ENCODE measurements at regions of chr9 and their contacts with region 1.

Region 1: DNA sequence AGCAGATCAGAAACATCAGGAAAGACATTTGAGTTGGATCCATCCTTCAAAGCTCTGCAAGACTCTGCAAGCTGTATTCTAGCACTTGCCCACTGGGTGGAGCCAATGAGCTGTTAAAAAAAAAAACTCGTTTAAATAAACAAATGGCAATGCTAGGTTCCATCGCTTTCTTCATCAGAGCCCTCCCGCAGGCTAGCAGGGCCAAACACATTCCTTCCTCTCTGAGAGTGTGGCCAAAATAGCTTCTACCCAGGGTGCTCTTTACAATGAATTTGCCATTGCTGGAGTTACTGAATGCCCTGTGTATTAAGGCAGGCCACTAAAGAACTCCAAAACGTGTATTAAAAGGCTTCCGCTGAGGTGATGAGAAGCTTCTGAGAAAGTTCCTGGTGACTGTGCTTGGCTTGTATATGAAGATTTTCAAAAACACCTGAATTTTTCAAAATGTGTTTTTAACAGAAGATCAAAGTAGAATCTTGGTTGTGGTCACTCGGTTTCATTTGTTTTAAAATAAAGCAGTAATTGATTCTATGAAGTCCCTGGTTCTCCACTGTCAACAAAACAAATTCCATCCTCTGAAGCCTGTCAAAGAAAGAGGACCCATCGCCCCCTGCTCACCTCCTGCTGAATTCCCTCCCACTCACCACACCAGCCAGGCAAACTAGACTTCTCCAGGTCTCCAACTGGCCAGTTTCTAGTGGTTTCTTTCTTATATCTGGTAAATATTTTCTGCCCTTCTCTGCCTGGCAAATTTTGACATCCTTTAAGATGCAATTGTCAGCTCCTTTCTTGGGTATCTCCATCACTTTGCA is 36.5 kb upstream of the EQTN start:
- DNase-seq: peak in 2 of 3 donors; percentile 44 to 66
- ATAC-seq: peak; percentile 81
- H3K4me3 ChIP-seq: no peak overlapping the region
- H3K4me1 ChIP-seq: peaks cover 13% of the 10 kb centered on the region
- CTCF ChIP-seq: peak; percentile 85

Region 2: DNA sequence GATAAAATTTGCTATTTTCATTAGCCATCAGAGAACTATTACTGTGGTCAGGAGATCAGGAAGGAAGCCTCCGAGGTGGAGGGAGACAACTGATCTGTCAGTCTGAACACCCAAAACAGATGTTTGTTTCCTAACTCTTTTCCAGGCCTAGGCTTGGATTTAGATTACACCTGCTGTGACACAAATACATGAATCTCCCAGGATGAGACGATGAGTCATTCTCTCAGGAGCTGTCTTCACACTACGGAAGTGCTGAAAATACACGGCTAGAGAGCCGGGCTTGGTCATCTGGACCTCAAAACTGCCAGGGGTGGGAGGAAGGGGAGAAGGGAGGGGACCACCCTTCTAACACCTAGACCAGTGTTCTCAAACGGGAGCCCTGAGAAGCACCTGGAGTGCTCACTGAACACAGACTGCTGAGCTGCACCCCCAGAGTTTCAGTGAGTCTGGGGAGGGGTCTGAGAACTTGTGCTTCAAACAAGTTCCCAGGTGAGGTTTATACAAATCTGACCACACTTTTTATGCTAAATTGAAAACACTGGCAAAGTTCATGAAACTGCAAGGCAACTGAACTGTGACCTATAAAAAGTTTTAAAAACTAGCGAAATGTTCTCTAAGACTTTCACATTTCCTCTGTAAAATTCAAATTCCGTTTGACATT is 43.8 kb after region 1 on chr9:
- intact Hi-C with region 1: loop called in 1 of 2 experiments (anchors 5 kb)
- DNase-seq: no peak
- ATAC-seq: peak; percentile 55
- H3K4me3 ChIP-seq: no peak overlapping the region
- H3K4me1 ChIP-seq: peaks cover 48% of the 10 kb centered on the region
- CTCF ChIP-seq: no peak

Region 3: DNA sequence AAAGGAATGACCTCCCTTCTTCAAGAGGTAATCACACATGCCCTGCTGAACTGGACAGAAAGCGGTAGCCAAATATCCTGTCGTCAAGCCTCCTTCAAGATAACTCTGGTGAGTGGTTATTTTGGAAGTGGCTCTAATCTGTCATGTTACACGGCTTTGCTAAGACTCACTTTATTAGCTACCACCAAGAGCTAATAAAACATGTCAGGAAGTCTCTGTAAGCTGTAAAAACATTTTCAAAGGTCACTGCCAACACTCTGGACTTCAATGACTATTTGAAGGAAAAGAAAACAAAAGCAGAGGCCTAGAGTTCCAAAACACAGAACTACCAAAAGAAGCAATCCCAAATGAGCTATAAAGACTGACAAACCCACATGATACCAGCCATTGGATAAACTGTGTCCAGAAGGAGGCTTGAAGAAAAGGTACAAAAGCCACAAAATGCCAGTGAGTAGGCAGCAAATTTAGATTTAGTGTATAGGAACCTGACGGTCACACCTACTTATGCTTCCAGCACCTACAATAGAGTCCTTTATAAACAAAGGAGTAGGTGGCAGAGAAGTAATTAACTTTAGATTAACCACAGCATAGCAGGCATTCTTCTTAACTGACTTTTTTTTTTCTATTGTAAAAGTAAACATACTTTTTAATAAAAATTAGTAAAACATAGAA is 60.8 kb after region 1 on chr9:
- intact Hi-C with region 1: loop called in 1 of 2 experiments (anchors 10 kb)
- DNase-seq: no peak
- ATAC-seq: peak; percentile 80
- H3K4me3 ChIP-seq: no peak overlapping the region
- H3K4me1 ChIP-seq: peaks cover 28% of the 10 kb centered on the region
- CTCF ChIP-seq: no peak

Region 4: GRCh38 chr9:27529316-27530278 is 196.2 kb after region 1 on chr9 and contains the start of gene MOB3B:
- intact Hi-C with region 1: loop called in 1 of 2 experiments (anchors 5 kb)
- DNase-seq: peak; percentile 84 to 93 (median 92)
- ATAC-seq: peak; percentile 86
- H3K4me3 ChIP-seq: peak within 1 kb of the TSS; percentile 82
- H3K4me1 ChIP-seq: peaks cover 12% of the 10 kb centered on the region
- CTCF ChIP-seq: peak; percentile 82
- total RNA-seq, gene MOB3B: 34.6 to 57.5 (median 41.7) TPM

Region 5: GRCh38 chr9:27548055-27548741 is 214.8 kb after region 1 on chr9:
- intact Hi-C with region 1: loop called (anchors 5 kb)
- DNase-seq: peak in 1 of 3 donors; percentile 25
- ATAC-seq: peak; percentile 71
- H3K4me3 ChIP-seq: no peak overlapping the region
- H3K4me1 ChIP-seq: peaks cover 4% of the 10 kb centered on the region
- CTCF ChIP-seq: no peak

Region 6: GRCh38 chr9:27945388-27945787 is 611.9 kb after region 1 on chr9:
- intact Hi-C with region 1: no loop called
- DNase-seq: no peak
- ATAC-seq: no peak
- H3K4me3 ChIP-seq: no peak overlapping the region
- H3K4me1 ChIP-seq: no peaks in the 10 kb centered on the region
- CTCF ChIP-seq: no peak